ENCODE measurements at regions of chr17 and their contacts with region 1.

Region 1: DNA sequence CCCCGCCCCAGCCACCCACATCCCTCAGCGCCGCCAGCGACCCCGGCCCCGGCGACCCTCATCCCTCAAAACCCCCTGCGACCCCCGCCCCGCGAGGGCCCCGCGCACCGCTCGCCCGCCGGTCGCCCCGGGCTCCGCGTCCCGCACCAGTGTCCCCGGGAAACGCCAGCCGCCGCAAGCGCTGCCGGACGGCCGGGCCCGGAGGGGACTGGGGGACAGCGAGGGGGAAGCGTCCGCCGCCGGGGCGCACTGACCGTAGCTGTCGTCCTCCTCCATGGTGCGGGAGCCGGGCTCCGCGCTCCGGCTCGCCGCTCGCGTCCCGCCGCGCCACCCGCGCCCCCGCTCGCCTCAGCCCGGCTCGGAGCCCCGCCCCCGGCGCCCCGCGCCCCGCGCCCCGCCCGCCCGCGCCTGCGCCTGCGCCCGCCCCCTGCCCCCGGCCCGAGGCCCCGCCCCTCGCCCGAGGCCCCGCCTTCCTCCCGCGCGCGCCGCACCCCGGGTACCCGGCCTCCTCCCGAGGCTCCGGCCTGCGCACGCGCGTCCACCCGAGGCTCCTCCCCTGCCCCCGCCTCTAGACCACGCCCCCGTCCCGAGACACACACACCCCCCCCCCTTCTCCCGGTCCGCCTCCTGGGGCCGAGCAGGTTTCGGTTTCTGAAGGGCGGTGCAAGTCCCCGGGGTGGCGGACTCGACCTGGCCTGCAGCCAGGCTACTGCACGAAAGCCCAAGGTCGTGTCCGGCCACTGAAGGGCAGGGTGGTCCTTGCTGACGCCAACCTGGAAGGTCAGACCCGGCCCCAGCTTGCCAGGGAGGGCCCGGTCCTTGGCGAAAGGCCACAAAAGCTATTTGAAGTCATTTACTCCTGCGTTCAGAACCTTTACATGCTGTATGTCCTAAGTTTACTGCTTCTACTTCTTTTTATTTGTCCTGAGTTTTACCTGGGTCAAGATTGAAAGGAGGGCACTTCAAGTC is at the start of gene CYTH1:
- DNase-seq: peak; percentile 100
- ATAC-seq: peak; percentile 62
- H3K4me3 Mint-ChIP-seq: peak within 1 kb of the TSS; percentile 93
- H3K27ac Mint-ChIP-seq: peak within 1 kb of the TSS; percentile 99
- H3K4me1 Mint-ChIP-seq: peaks cover 47% of the 10 kb centered on the region
- H3K27me3 Mint-ChIP-seq: no peaks in the 10 kb centered on the region
- total RNA-seq, gene CYTH1: 180 to 200 TPM

Region 2: DNA sequence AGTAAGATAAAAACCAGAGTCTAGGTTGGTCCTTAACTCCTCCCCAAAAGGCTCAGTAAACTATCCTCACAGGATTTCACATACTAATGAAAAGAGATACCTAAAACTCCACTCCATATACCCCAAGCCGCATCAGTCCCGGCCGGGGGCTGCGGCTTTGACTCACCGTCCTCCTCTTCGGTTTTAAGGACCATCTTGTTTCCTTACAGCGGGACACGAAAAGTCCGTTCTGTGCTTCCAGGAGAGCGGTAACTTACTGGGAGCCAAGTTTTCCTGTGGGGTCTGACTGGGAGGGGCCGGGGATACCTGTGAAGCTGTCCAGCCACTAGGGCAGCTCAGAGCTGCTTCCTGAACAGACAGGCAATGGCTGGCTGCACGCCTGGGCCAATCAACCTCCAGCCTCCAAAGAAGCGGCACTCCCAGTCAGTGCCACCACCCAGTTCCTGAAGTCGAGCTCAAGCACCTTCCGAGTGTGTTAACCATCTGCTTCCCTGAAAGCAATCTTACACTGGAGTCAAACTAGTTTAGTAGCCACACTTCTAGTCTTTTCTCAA is 45.6 kb before region 1 on chr17:
- POLR2A ChIA-PET with region 1: interaction called, 15 read pairs
- DNase-seq: peak; percentile 68
- ATAC-seq: peak; percentile 85
- H3K4me3 Mint-ChIP-seq: peak overlapping the region; percentile 88
- H3K27ac Mint-ChIP-seq: peak overlapping the region; percentile 91
- H3K4me1 Mint-ChIP-seq: peaks cover 70% of the 10 kb centered on the region
- H3K27me3 Mint-ChIP-seq: no peaks in the 10 kb centered on the region

Region 3: GRCh38 chr17:78745407-78746088 is 36.7 kb before region 1 on chr17:
- POLR2A ChIA-PET with region 1: interaction called, 41 read pairs
- DNase-seq: no peak
- ATAC-seq: no peak
- H3K4me3 Mint-ChIP-seq: peak overlapping the region; percentile 30
- H3K27ac Mint-ChIP-seq: peak overlapping the region; percentile 41
- H3K4me1 Mint-ChIP-seq: peaks cover 70% of the 10 kb centered on the region
- H3K27me3 Mint-ChIP-seq: no peaks in the 10 kb centered on the region

Region 4: DNA sequence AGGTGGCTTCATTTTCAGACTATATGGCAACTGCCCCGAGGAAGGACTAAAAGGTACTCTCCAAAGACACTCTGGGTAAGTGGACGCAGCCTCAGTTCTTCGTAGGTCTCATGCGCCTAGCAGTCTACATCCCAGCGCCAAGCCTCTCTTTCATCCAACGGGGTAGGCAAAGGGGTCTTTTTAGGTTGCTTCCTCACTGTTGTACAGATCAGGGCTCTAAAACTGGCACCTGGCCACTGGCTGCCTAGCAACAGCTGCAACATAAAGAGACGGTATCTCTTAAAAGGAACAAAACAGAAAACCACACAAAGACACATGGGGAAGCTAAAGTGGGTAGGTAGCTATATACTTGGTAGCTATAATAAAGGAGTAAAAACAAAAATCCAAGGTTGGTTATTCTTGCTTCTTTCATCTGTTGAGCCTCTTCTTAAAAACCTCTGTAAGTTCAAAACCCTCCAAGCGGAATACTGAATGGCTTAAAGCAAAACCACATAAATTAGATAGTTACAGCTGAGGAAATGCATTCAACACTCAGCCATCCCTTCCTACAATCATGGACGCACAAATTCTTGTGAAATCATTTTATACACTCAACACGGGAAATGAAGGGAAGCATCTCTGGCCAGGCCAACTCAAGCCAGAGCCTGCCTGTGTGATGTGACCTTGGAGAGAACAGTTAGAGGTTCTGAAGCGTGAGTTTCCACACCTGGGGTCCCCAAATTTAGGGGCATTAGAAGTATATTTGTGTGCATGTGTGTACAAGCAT is 22.8 kb before region 1 on chr17:
- POLR2A ChIA-PET with region 1: interaction called, 18 read pairs
- DNase-seq: peak; percentile 65
- ATAC-seq: peak; percentile 77
- H3K4me3 Mint-ChIP-seq: peak overlapping the region; percentile 64
- H3K27ac Mint-ChIP-seq: peak overlapping the region; percentile 86
- H3K4me1 Mint-ChIP-seq: peaks cover 50% of the 10 kb centered on the region
- H3K27me3 Mint-ChIP-seq: no peaks in the 10 kb centered on the region

Region 5: GRCh38 chr17:78769196-78769773 is 12.9 kb before region 1 on chr17:
- POLR2A ChIA-PET with region 1: interaction called, 15 read pairs
- DNase-seq: no peak
- ATAC-seq: peak; percentile 40
- H3K4me3 Mint-ChIP-seq: no peak overlapping the region
- H3K27ac Mint-ChIP-seq: no peak overlapping the region
- H3K4me1 Mint-ChIP-seq: peaks cover 32% of the 10 kb centered on the region
- H3K27me3 Mint-ChIP-seq: no peaks in the 10 kb centered on the region

Region 6: GRCh38 chr17:78818932-78819331 is 36.7 kb after region 1 on chr17:
- POLR2A ChIA-PET with region 1: interaction called, 13 read pairs
- DNase-seq: no peak
- ATAC-seq: peak; percentile 72
- H3K4me3 Mint-ChIP-seq: peak overlapping the region; percentile 78
- H3K27ac Mint-ChIP-seq: peak overlapping the region; percentile 92
- H3K4me1 Mint-ChIP-seq: peaks cover 31% of the 10 kb centered on the region
- H3K27me3 Mint-ChIP-seq: no peaks in the 10 kb centered on the region

Region 7: DNA sequence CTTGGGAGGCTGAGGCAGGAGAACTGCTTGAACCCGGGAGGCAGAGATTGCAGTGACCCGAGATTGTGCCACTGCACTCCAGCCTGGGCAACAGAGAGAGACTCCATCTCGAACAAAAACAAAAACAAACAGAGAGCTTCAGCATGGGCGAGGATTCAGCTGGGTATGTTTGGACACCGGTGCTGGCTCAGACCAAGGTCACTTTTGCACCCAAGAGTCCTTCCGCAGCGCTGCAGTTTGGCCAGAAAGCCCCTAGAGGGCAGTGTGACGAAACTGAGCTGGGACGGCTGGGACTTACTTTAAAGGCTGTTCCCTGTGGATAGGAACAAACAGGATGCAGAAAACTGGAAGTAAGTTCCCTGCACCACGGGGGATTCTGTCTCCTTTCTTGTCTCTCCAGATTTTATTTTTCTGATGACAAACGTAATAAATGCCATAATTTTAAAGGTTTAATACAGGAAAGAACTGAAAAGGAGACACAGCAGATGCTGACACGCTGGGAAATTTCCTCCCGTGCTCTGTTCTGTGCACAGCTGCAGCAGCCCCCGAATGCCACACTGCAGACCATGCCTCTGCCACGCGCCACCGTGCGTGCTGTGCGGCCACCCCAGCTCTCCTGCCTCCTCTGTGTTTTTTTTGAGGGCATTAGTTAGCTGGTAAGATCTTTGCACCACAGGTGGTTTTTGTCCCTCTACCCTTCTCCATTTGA is 83.6 kb after region 1 on chr17:
- POLR2A ChIA-PET with region 1: no interaction called
- DNase-seq: peak; percentile 73
- ATAC-seq: peak; percentile 79
- H3K4me3 Mint-ChIP-seq: no peak overlapping the region
- H3K27ac Mint-ChIP-seq: no peak overlapping the region
- H3K4me1 Mint-ChIP-seq: peaks cover 1% of the 10 kb centered on the region
- H3K27me3 Mint-ChIP-seq: no peaks in the 10 kb centered on the region